Ascending aorta (tissue), 2 donors: ENCODE measurements at regions of chr9 and their contacts with region 1.

Region 1: GRCh38 chr9:25716220-25716872 is 38.1 kb upstream of the TUSC1 start:
- DNase-seq: no peak
- H3K4me3 ChIP-seq: no peak overlapping the region
- H3K27ac ChIP-seq: no peak overlapping the region
- H3K4me1 ChIP-seq: no peaks in the 10 kb centered on the region
- H3K27me3 ChIP-seq: no peaks in the 10 kb centered on the region
- CTCF ChIP-seq: peak; percentile 31 to 49 (median 42)

Region 2: DNA sequence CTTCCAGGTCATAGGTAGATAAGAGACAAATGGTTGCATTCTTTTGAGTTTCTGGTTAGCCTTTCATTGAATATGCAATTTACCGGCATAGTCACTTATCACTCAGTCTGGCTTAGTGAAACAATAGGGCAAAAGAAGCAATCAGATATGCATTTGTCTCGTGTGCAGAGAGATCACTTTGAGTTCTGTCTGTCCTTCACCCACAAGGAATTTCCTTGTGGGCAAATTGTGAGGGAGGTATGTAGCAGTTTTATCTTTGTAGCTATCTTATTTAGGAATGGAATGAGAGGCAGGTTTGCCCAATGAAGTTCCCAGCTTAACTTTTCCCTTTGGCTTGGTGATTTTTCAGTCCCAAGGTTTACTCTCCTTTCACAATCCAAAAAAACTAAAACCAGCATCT is 154.2 kb before region 1 on chr9:
- intact Hi-C with region 1: loop called (anchors 10 kb)
- DNase-seq: no peak
- H3K4me3 ChIP-seq: no peak overlapping the region
- H3K27ac ChIP-seq: no peak overlapping the region
- H3K4me1 ChIP-seq: no peaks in the 10 kb centered on the region
- H3K27me3 ChIP-seq: no peaks in the 10 kb centered on the region
- CTCF ChIP-seq: no peak

Region 3: DNA sequence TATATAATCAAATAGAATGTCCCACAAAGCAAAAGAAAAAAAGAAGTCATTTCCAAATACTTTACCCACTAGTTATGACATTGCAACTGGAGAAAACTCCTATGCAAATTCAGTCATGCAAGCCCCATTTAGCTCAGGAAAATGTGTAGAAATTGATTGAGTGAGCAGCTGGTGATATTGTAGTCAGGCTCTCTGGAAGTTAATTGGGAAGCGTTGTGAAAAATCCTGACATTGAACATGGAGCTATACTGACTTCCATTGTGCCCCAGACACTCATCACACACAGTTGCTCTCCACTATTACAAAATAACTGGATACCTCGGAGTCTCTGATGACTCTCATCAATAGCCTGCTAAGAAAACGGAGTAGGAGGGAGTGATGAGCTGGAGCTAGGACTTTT is 87.1 kb before region 1 on chr9:
- intact Hi-C with region 1: loop called (anchors 10 kb)
- DNase-seq: no peak
- H3K4me3 ChIP-seq: no peak overlapping the region
- H3K27ac ChIP-seq: no peak overlapping the region
- H3K4me1 ChIP-seq: no peaks in the 10 kb centered on the region
- H3K27me3 ChIP-seq: no peaks in the 10 kb centered on the region
- CTCF ChIP-seq: no peak